Left ventricle myocardium superior (tissue), 1 donor: ENCODE measurements at regions of chr5 and their contacts with region 1.

Region 1: GRCh38 chr5:179697993-179698934 is 503 bp upstream of the CANX start:
- DNase-seq: peak; percentile 100
- ATAC-seq: peak; percentile 95

Region 2: DNA sequence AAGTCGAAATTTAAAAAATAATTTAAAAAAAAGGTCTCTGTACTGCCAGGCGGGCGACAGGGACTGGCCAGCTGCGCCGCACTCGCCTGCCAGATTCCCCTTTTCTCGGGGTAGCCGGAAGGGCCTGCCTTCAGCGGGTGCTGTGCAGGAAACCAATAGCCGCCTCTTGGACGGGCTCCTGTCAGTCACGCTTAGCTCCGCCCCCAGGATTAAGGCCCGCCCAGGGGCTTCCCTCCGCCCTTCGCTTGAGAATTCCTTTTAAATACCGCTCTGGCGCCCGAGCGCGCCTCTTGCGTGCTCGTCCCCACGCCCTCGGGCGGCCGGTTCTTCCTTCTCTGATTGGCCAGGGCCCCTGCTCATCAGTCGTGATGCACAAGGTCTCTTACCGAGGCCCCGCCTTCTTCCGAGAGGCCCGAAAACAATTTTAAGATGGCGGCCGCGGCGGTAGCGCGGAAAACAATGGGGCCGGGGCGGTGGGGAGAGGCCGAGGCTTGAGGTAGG is 34.2 kb after region 1 on chr5 and contains the start of gene MAML1:
- intact Hi-C with region 1: loop called (anchors 2 kb)
- DNase-seq: peak; percentile 100
- ATAC-seq: peak; percentile 99
- total RNA-seq, gene MAML1: 13.5 TPM